A673 (cell line): ENCODE measurements at regions of chr6 and their contacts with region 1.

Region 1: DNA sequence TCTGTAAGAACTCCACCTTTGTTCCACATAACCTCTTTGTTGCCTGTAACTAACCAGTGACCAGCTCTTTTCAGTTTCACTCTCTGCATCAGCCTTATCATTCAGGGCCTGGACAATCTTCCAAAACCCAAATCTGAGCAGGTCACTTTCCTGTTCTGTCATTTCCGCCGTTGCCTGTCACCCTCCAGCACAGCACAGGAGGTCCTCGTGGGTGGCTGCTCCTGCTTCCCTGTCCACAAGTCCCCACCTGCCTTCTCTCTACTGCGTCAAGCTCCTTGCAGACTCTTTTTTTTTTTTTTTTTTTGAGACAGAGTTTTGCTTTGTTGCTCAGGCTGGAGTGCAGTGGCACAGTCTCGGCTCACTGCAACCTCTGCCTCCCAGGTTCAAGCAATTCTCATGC is 73.9 kb downstream of the MTHFD1L start:
- DNase-seq: no peak
- H3K4me3 ChIP-seq: no peak overlapping the region
- H3K27ac ChIP-seq: no peak overlapping the region
- H3K4me1 ChIP-seq: no peaks in the 10 kb centered on the region
- H3K27me3 ChIP-seq: no peaks in the 10 kb centered on the region
- CTCF ChIP-seq: no peak

Region 2: DNA sequence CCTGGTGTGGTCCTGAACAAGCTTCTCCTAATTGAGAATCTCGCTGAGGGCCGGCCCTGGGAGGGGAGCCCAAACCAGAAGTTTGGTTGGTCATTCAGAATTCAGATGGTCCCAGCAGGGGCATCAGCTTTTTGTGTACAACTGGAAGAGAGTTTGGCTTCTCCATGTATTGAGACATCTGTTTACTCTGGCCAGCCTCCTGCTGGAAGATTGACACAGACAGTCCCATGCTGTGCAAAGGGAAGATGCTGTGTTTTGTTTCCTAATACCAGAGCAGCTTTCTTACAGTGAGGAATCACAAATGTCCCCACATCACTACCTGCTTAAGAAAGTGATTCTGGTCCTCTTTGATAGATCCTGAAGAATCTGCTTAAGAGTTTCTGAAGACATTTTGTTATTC is 241.9 kb before region 1 on chr6:
- CTCF ChIA-PET with region 1: no interaction called
- POLR2A ChIA-PET with region 1: no interaction called
- intact Hi-C with region 1: no loop called
- DNase-seq: peak; percentile 44
- H3K4me3 ChIP-seq: no peak overlapping the region
- H3K27ac ChIP-seq: no peak overlapping the region
- H3K4me1 ChIP-seq: peaks cover 36% of the 10 kb centered on the region
- H3K27me3 ChIP-seq: no peaks in the 10 kb centered on the region
- CTCF ChIP-seq: no peak

Region 3: GRCh38 chr6:150949526-150949925 is 10.1 kb after region 1 on chr6:
- CTCF ChIA-PET with region 1: no interaction called
- POLR2A ChIA-PET with region 1: interaction called, 20 read pairs
- intact Hi-C with region 1: no loop called
- DNase-seq: no peak
- H3K4me3 ChIP-seq: no peak overlapping the region
- H3K27ac ChIP-seq: no peak overlapping the region
- H3K4me1 ChIP-seq: no peaks in the 10 kb centered on the region
- H3K27me3 ChIP-seq: no peaks in the 10 kb centered on the region
- CTCF ChIP-seq: no peak

Region 4: GRCh38 chr6:150999107-150999506 is 59.7 kb after region 1 on chr6:
- CTCF ChIA-PET with region 1: no interaction called
- POLR2A ChIA-PET with region 1: no interaction called
- intact Hi-C with region 1: no loop called
- DNase-seq: no peak
- H3K4me3 ChIP-seq: no peak overlapping the region
- H3K27ac ChIP-seq: peak overlapping the region; percentile 5
- H3K4me1 ChIP-seq: peaks cover 52% of the 10 kb centered on the region
- H3K27me3 ChIP-seq: no peaks in the 10 kb centered on the region
- CTCF ChIP-seq: no peak

Region 5: DNA sequence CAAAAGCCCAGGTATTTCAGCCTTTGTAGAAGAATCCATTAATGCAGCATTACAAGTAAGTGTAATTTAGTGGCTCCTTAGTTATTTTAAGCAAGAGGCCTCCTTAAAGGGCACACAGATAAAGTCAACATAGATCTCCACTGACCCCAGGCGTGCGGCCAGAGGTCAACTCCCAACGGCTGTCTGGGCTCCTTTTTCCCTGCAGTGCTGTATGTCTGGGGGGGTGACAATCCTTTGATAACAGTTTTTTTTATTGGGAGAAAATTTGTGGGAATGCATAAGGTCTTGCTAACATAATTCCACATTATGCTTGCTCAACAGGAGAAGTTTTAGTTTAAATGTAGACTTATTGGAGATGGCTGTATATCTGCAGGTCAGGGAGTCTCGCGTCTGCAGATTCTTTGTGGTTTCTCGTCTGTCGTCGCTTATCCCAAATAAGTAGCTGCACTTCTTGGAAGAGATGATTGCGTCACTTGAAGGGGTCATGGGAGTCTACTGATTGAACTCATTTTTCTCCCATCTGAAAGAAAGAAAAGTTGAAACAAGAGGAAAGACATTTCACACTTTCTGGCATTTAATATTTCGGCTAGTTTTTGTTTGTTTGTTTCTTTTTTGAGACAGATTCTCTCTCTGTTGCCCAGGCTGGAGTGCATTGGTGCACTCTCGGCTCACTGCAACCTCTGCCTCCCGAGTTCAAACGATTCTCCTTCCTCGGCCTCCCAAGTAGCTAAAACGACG is 148.6 kb after region 1 on chr6:
- CTCF ChIA-PET with region 1: no interaction called
- POLR2A ChIA-PET with region 1: no interaction called
- intact Hi-C with region 1: no loop called
- DNase-seq: no peak
- H3K4me3 ChIP-seq: no peak overlapping the region
- H3K27ac ChIP-seq: no peak overlapping the region
- H3K4me1 ChIP-seq: no peaks in the 10 kb centered on the region
- H3K27me3 ChIP-seq: no peaks in the 10 kb centered on the region
- CTCF ChIP-seq: no peak

Region 6: GRCh38 chr6:151119823-151120524 is 180.6 kb after region 1 on chr6:
- CTCF ChIA-PET with region 1: no interaction called
- POLR2A ChIA-PET with region 1: interaction called, 11 read pairs
- intact Hi-C with region 1: no loop called
- DNase-seq: peak; percentile 19
- H3K4me3 ChIP-seq: no peak overlapping the region
- H3K27ac ChIP-seq: no peak overlapping the region
- H3K4me1 ChIP-seq: no peaks in the 10 kb centered on the region
- H3K27me3 ChIP-seq: no peaks in the 10 kb centered on the region
- CTCF ChIP-seq: no peak